Activated CD4-positive, alpha-beta T cell treated with anti-CD3 and anti-CD28 coated beads for 36 hours (primary cell): ENCODE measurements at regions of chr2 and their contacts with region 1.

Region 1: GRCh38 chr2:25521665-25522387 is 151.6 kb downstream of the DTNB start:
- DNase-seq: peak; percentile 34
- ATAC-seq: peak; percentile 98
- H3K4me3 Mint-ChIP-seq: peak overlapping the region; percentile 24
- H3K27ac Mint-ChIP-seq: peak overlapping the region; percentile 77
- H3K4me1 Mint-ChIP-seq: peaks cover 7% of the 10 kb centered on the region
- H3K27me3 Mint-ChIP-seq: no peaks in the 10 kb centered on the region

Region 2: GRCh38 chr2:25165992-25166875 is 355.6 kb before region 1 on chr2:
- CTCF ChIA-PET with region 1: no interaction called
- POLR2A ChIA-PET with region 1: no interaction called
- intact Hi-C with region 1: loop called in 1 of 2 experiments (anchors 1 kb)
- DNase-seq: peak; percentile 74
- ATAC-seq: peak; percentile 74
- H3K4me3 Mint-ChIP-seq: no peak overlapping the region
- H3K27ac Mint-ChIP-seq: peak overlapping the region; percentile 42
- H3K4me1 Mint-ChIP-seq: peaks cover 23% of the 10 kb centered on the region
- H3K27me3 Mint-ChIP-seq: peaks cover 28% of the 10 kb centered on the region

Region 3: GRCh38 chr2:25309402-25309801 is 212.4 kb before region 1 on chr2:
- CTCF ChIA-PET with region 1: interaction called, 3 read pairs
- POLR2A ChIA-PET with region 1: no interaction called
- intact Hi-C with region 1: loop called (anchors 1 to 2 kb)
- DNase-seq: peak; percentile 83
- ATAC-seq: peak; percentile 20
- H3K4me3 Mint-ChIP-seq: no peak overlapping the region
- H3K27ac Mint-ChIP-seq: peak overlapping the region; percentile 9
- H3K4me1 Mint-ChIP-seq: peaks cover 76% of the 10 kb centered on the region
- H3K27me3 Mint-ChIP-seq: no peaks in the 10 kb centered on the region

Region 4: DNA sequence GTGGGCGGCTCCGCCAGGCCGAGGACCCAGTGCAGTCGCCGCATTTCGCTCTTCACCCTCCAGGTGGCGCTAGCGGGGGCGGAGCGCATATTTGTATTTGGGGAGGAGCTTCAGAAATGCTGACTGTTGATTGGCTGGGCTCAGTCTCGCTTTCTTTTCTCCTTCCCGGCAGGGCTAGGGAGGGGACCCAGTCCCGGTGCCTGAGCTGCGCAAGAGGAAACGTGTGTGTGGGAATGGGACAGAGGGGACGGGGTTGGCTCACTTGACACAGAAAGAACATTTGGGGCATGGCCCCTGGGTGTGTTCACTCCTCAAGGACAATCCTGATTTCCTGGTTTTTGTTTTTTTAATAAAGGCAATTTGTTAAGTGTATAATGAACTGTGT is 159.8 kb before region 1 on chr2:
- CTCF ChIA-PET with region 1: interaction called, 8 read pairs
- POLR2A ChIA-PET with region 1: interaction called, 9 read pairs
- intact Hi-C with region 1: loop called (anchors 1 kb)
- DNase-seq: peak; percentile 97
- ATAC-seq: peak; percentile 97
- H3K4me3 Mint-ChIP-seq: peak overlapping the region; percentile 79
- H3K27ac Mint-ChIP-seq: peak overlapping the region; percentile 96
- H3K4me1 Mint-ChIP-seq: peaks cover 14% of the 10 kb centered on the region
- H3K27me3 Mint-ChIP-seq: no peaks in the 10 kb centered on the region

Region 5: DNA sequence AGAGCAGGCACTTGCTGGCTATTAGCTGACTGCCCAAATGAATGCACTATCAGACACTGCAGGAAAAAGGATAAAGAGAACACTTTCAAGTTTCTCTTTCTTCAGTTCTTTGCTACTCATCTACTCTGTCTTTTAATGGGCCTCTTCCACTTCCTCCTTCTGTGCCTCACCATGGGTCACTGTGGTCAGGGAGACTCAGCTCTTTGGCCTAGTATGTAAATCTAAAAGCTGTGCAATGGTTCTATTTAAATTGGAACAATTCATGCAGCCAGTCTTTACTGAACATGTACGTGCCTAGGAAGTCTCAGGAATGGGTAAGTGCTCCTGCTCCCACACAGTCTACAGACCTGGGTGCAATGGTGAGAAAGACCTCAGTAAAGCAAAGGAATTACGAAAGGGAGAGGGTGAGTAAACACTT is 101.0 kb before region 1 on chr2:
- CTCF ChIA-PET with region 1: no interaction called
- POLR2A ChIA-PET with region 1: no interaction called
- intact Hi-C with region 1: no loop called
- DNase-seq: no peak
- ATAC-seq: no peak
- H3K4me3 Mint-ChIP-seq: no peak overlapping the region
- H3K27ac Mint-ChIP-seq: no peak overlapping the region
- H3K4me1 Mint-ChIP-seq: no peaks in the 10 kb centered on the region
- H3K27me3 Mint-ChIP-seq: no peaks in the 10 kb centered on the region

Region 6: GRCh38 chr2:25567406-25567805 is 45.6 kb after region 1 on chr2:
- CTCF ChIA-PET with region 1: no interaction called
- POLR2A ChIA-PET with region 1: no interaction called
- intact Hi-C with region 1: loop called in 1 of 2 experiments (anchors 1 kb)
- DNase-seq: no peak
- ATAC-seq: peak; percentile 55
- H3K4me3 Mint-ChIP-seq: no peak overlapping the region
- H3K27ac Mint-ChIP-seq: no peak overlapping the region
- H3K4me1 Mint-ChIP-seq: peaks cover 3% of the 10 kb centered on the region
- H3K27me3 Mint-ChIP-seq: no peaks in the 10 kb centered on the region